MCF 10A (cell line): ENCODE measurements at regions of chr11 and their contacts with region 1.

Region 1: DNA sequence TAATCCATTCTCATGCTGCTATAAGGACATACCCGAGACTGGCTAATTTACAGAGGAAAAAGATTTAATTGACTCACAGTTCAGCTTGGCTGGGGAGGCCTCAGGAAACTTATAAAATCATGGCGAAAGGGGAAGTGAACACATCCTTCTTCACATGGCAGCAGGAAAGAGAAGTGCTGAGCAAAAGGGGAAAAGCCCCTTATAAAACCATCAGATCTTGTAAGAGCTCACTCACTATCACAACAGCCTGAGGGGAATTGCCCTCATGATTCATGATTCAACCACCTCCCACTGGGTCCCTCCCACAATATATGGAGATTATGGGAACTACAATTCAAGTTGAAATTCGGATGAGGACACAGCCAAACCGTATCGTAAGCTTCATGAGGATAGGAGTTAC is 3.8 kb upstream of the CYB5R2 start:
- DNase-seq: peak; percentile 95
- H3K4me3 Mint-ChIP-seq: peak overlapping the region; percentile 15
- H3K27ac Mint-ChIP-seq: peak overlapping the region; percentile 50
- H3K4me1 Mint-ChIP-seq: peaks cover 20% of the 10 kb centered on the region
- H3K27me3 Mint-ChIP-seq: no peaks in the 10 kb centered on the region
- CTCF ChIP-seq: no peak

Region 2: DNA sequence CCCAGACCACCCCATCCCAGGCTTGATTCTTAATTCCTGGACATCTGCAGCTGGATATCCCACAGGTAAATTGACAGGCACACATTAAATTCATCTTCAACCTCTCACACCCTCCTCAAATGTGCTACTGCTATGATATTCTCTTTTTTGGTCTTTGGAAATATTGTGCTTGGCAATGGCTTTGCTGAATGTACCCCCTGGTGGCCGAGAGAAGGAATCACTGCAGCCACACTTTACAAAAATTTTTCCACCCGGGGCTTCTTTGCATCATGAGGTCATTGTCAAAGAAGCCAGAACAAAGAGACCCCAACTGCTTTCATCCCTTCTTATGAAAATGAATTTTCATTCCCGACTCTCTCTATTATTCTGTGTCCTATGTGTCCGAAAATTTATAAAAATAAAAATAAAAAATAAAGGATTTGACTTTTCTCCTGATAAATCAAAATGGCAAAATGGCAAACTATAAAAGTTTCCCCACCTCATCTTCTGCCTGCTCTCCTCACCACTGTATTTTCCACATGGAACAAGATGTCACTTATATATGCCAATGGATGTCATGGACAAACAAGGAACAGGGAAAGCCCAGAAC is 11.3 kb after region 1 on chr11:
- CTCF ChIA-PET with region 1: interaction called, 14 read pairs
- POLR2A ChIA-PET with region 1: no interaction called
- intact Hi-C with region 1: no loop called
- DNase-seq: peak; percentile 32
- H3K4me3 Mint-ChIP-seq: no peak overlapping the region
- H3K27ac Mint-ChIP-seq: no peak overlapping the region
- H3K4me1 Mint-ChIP-seq: peaks cover 13% of the 10 kb centered on the region
- H3K27me3 Mint-ChIP-seq: peaks cover 11% of the 10 kb centered on the region
- CTCF ChIP-seq: peak; percentile 62

Region 3: DNA sequence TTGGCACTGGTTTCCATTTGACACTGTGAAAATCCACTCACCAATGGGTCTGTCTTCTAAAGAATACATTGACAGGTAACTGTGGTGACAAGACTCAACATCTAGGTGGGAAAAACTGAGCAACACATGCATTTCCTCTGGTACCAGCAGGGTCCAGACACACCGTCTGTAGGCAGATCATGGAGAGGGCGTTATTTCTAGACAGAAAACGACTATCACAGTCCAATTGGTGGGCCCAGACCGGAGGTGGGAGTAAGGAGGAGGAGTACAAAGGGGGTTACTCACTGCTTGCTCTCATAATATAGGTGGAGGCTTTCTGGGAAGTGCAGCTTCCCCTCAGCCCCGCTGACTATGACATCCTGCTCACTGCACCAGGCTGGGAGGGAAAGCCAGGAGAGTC is 19.4 kb after region 1 on chr11:
- CTCF ChIA-PET with region 1: interaction called, 12 read pairs
- POLR2A ChIA-PET with region 1: no interaction called
- intact Hi-C with region 1: no loop called
- DNase-seq: no peak
- H3K4me3 Mint-ChIP-seq: no peak overlapping the region
- H3K27ac Mint-ChIP-seq: no peak overlapping the region
- H3K4me1 Mint-ChIP-seq: peaks cover 5% of the 10 kb centered on the region
- H3K27me3 Mint-ChIP-seq: peaks cover 41% of the 10 kb centered on the region
- CTCF ChIP-seq: no peak